Natural killer cell (primary cell): ENCODE measurements at regions of chr9 and their contacts with region 1.

Region 1: DNA sequence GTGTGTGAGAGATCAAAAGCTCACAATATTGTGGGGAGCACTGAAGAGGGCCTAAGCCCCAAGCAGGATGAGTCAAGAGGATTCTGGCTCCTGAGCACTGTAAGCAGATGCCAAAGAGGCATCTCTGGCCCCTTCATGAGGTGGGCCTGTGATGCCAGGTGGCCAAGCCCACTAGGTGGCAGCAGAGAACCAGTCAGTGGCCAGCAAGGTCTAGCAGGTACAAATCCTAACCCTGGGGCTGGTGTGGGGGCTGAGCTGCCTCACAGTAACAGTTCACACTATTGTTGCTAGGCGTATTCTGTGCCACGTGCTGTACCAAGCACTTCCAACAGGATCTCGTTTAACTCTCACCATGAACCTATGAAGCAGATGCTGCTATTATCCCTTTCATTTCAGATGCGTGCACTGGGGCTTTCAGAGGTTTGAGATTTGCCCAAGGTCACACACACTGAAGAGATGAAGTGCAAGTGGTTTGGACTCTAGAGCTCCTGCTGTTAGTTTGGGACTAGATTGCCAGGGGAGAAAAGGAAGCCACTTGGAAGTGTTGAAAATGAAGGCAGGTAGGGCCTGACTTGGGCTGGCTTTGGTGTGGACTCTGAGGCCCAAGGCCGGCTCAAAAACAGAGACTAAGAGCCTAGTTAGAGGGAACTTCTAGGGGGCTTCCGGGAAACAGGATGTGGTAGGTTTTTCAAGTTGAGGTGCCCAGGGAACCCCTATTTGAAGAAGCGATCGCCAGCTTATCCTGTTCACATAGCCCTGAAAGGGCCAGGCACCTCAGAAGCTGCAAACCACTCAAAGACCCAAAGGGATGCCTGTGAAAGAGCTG is 4.4 kb upstream of the MLANA start:
- DNase-seq: peak; percentile 79 to 87
- ATAC-seq: peak; percentile 92 to 99 (median 99)
- H3K4me3 ChIP-seq: no peak overlapping the region
- H3K4me3 Mint-ChIP-seq: no peak overlapping the region
- H3K27ac ChIP-seq: no peak overlapping the region
- H3K27ac Mint-ChIP-seq: peak overlapping the region in 1 of 2 donors; percentile 65
- H3K4me1 ChIP-seq: peaks cover 12% of the 10 kb centered on the region
- H3K4me1 Mint-ChIP-seq: peaks cover 10 to 18% of the 10 kb centered on the region in 2 donors
- H3K27me3 ChIP-seq: no peaks in the 10 kb centered on the region
- H3K27me3 Mint-ChIP-seq: peaks cover 0 to 2% of the 10 kb centered on the region in 2 donors
- CTCF ChIP-seq: peak; percentile 90

Region 2: DNA sequence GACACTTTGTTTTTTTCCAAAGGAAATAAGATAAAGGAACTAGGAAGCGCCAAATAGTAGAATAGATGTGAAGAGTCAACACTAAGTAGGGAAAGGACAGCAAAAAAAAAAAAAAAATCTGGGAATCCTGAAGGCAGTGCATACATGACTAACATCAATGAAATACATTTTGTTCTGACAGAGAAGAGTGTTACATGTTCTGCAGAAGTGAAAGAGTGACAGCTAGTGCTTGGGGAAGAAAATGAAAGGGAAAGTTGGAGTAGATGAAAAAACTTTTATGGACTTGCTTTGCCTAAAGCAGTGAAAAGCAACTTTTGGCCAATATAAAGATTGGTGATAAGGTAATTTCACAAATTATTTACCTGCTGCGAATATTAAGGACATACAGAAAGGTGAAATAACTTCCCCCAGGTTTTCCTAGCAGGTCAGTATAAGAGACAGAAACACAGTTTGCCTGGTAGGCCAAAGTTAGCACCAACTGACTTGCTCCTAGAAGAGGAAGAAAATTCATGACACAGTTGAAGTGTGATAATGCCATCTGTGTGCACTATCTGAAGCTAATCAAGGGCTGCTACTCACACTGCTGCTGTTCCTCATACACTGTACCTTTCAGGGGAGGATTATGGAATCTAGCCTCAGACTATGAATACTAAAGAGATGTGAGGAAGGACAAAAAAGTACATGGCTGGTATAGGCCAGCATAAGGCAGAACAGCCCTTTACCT is 90.5 kb after region 1 on chr9:
- intact Hi-C with region 1: loop called (anchors 2 kb)
- DNase-seq: no peak
- ATAC-seq: peak in 2 of 3 donors; percentile 63 to 69
- H3K4me3 ChIP-seq: no peak overlapping the region
- H3K4me3 Mint-ChIP-seq: no peak overlapping the region
- H3K27ac ChIP-seq: peak overlapping the region; percentile 59
- H3K27ac Mint-ChIP-seq: peak overlapping the region; percentile 74 to 82
- H3K4me1 ChIP-seq: no peaks in the 10 kb centered on the region
- H3K4me1 Mint-ChIP-seq: peaks cover 37 to 40% of the 10 kb centered on the region in 2 donors
- H3K27me3 ChIP-seq: no peaks in the 10 kb centered on the region
- H3K27me3 Mint-ChIP-seq: no peaks in the 10 kb centered on the region
- CTCF ChIP-seq: no peak

Region 3: GRCh38 chr9:6305954-6306563 is 419.7 kb after region 1 on chr9:
- intact Hi-C with region 1: loop called (anchors 5 kb)
- DNase-seq: peak in 1 of 2 donors; percentile 43
- ATAC-seq: peak in 1 of 3 donors; percentile 53
- H3K4me3 ChIP-seq: no peak overlapping the region
- H3K4me3 Mint-ChIP-seq: no peak overlapping the region
- H3K27ac ChIP-seq: no peak overlapping the region
- H3K27ac Mint-ChIP-seq: no peak overlapping the region
- H3K4me1 ChIP-seq: no peaks in the 10 kb centered on the region
- H3K4me1 Mint-ChIP-seq: no peaks in the 10 kb centered on the region
- H3K27me3 ChIP-seq: no peaks in the 10 kb centered on the region
- H3K27me3 Mint-ChIP-seq: peaks cover 5 to 35% of the 10 kb centered on the region in 2 donors
- CTCF ChIP-seq: peak; percentile 25